K562 (cell line): ENCODE measurements at regions of chrX and their contacts with region 1.

Region 1: GRCh38 chrX:109890895-109891502 is 111.9 kb upstream of the TMEM164 start:
- DNase-seq: peak; percentile 68 to 83 (median 70)
- ATAC-seq: peak; percentile 88
- H3K4me3 ChIP-seq: no peak overlapping the region
- H3K27ac ChIP-seq: no peak overlapping the region
- H3K4me1 ChIP-seq: peaks cover 7 to 21% of the 10 kb centered on the region in 2 experiments; a peak in 4 of 5 replicates
- H3K27me3 ChIP-seq: no peaks in the 10 kb centered on the region
- CTCF ChIP-seq: peak; percentile 83 to 90 (median 84)
- EP300 ChIP-seq: no peak
- POLR2A ChIP-seq: no peak
- RAD21 ChIP-seq: peak; percentile 57 to 77

Region 2: DNA sequence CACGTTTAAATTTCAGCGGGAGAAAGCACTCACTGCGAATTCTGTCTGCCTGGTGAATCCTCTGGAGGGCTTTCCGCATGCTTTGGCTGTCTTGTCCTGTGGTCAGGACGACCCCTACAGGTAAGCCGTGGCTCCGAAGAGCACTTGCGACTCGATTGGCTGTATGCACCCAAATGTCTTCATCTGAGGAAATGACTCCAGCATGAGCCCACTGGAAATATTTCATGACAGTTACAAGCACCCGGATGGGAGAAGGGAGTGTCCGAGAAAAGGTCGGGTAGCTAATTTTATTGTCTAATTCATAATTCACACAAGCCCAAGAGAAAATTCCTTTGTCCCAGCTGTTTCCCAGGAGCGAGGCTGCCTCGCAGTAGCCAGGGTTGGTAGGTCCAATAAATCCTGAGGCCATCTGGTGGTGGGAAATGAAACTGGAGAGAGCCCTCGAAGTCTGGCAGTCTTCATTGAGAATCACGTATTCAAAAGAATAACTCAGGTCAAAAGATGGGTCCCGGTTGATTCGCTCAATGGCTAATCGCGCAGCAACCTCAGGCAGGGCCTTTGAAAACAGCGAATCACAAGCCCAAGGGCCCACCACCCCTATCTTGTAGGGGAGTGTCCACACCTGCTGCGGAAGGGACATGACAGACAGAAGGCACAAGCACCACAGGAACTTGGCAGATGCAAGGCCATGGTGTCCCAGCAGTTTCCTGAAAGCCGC is 415.7 kb before region 1 on chrX:
- CTCF ChIA-PET with region 1: no interaction called
- POLR2A ChIA-PET with region 1: no interaction called
- in situ Hi-C with region 1: loop called (anchors 10 kb)
- intact Hi-C with region 1: no loop called
- DNase-seq: peak; percentile 23 to 48 (median 28)
- ATAC-seq: peak; percentile 93
- H3K4me3 ChIP-seq: no peak overlapping the region
- H3K27ac ChIP-seq: no peak overlapping the region
- H3K4me1 ChIP-seq: no peaks in the 10 kb centered on the region; a peak in 2 of 5 replicates
- H3K27me3 ChIP-seq: peaks cover 0 to 5% of the 10 kb centered on the region in 2 experiments; a peak in 2 of 5 replicates
- CTCF ChIP-seq: peak; percentile 41 to 49 (median 46); a peak in 5 of 6 replicates
- EP300 ChIP-seq: no peak
- POLR2A ChIP-seq: no peak
- RAD21 ChIP-seq: 0 out of 4 replicates have a peak, but pooled peaks have one; percentile 24 to 25

Region 3: GRCh38 chrX:109635176-109635575 is 255.8 kb before region 1 on chrX:
- CTCF ChIA-PET with region 1: no interaction called
- POLR2A ChIA-PET with region 1: no interaction called
- in situ Hi-C with region 1: no loop called
- intact Hi-C with region 1: loop called (anchors 5 kb)
- DNase-seq: peak; percentile 20 to 34 (median 24)
- ATAC-seq: peak; percentile 85
- H3K4me3 ChIP-seq: no peak overlapping the region
- H3K27ac ChIP-seq: no peak overlapping the region
- H3K4me1 ChIP-seq: no peaks in the 10 kb centered on the region
- H3K27me3 ChIP-seq: no peaks in the 10 kb centered on the region
- CTCF ChIP-seq: peak; percentile 51 to 64 (median 57); a peak in 5 of 6 replicates
- EP300 ChIP-seq: no peak
- POLR2A ChIP-seq: no peak
- RAD21 ChIP-seq: no peak

Region 4: DNA sequence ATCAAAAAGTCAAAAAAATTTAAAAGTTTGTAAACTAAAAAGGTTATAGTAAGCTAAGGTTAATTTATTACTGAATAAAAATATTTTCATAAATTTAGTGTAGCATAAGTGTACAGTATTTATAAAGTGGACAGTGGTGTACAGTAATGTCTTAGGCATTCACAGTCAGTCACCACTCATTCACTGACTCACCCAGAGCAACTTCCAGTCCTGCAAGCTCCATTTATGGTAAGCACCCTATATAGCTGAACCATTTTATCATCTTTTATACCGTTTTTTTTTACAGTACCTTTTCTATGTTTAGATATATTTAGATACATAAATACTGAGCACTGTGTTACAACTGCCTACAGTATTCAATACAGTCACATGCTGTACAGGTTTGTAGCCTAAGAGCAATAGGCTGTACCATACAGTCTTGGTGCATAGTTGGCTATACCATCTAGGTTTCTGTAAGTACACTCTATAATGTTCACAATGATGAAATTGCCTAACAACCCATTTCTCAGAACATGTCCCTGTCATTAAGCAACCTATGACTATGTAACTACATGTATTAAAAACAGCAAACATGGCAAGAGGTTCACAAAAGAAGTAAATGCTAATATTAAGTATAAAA is 176.6 kb before region 1 on chrX:
- CTCF ChIA-PET with region 1: interaction called, 16 read pairs
- POLR2A ChIA-PET with region 1: interaction called, 3 read pairs
- in situ Hi-C with region 1: loop called (anchors 10 kb)
- intact Hi-C with region 1: loop called (anchors 1 kb)
- DNase-seq: no peak
- ATAC-seq: no peak; the same call in 2 of the 3 replicates
- H3K4me3 ChIP-seq: no peak overlapping the region
- H3K27ac ChIP-seq: no peak overlapping the region
- H3K4me1 ChIP-seq: no peaks in the 10 kb centered on the region; a peak in 2 of 5 replicates
- H3K27me3 ChIP-seq: no peaks in the 10 kb centered on the region
- CTCF ChIP-seq: no peak
- EP300 ChIP-seq: no peak
- POLR2A ChIP-seq: no peak
- RAD21 ChIP-seq: no peak

Region 5: GRCh38 chrX:109952984-109953905 is 62.2 kb after region 1 on chrX:
- CTCF ChIA-PET with region 1: no interaction called
- POLR2A ChIA-PET with region 1: no interaction called
- in situ Hi-C with region 1: no loop called
- intact Hi-C with region 1: no loop called
- DNase-seq: no peak
- ATAC-seq: peak; percentile 53
- H3K4me3 ChIP-seq: no peak overlapping the region
- H3K27ac ChIP-seq: peak overlapping the region; percentile 5; the same call in 2 of the 3 replicates
- H3K4me1 ChIP-seq: peaks cover 0 to 43% of the 10 kb centered on the region in 2 experiments; a peak in 4 of 5 replicates
- H3K27me3 ChIP-seq: no peaks in the 10 kb centered on the region
- CTCF ChIP-seq: no peak
- EP300 ChIP-seq: no peak
- POLR2A ChIP-seq: no peak
- RAD21 ChIP-seq: no peak

Region 6: DNA sequence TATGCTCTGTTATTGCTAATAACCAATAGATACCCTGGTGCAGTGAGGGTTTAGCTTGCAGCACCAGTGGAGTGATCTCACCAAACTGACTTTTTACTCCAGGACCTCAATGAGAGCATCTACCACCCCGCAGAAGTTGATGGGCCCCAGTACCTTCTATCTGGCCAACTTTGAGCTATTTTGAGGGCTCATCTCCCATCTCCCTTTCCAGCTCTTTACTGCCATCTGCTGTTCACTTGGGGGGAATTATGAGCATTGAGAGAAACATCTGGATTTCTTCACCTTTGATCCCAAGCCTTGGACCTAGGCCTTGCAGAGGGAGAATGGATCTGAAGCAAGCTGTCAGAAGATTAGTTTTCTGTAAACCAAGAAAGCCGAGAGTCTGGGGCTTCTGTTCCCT is 255.5 kb after region 1 on chrX:
- CTCF ChIA-PET with region 1: no interaction called
- POLR2A ChIA-PET with region 1: no interaction called
- in situ Hi-C with region 1: no loop called
- intact Hi-C with region 1: loop called (anchors 1 kb)
- DNase-seq: peak; percentile 63 to 68 (median 64)
- ATAC-seq: peak; percentile 91
- H3K4me3 ChIP-seq: no peak overlapping the region
- H3K27ac ChIP-seq: no peak overlapping the region
- H3K4me1 ChIP-seq: peaks cover 4 to 7% of the 10 kb centered on the region in 2 experiments; a peak in 3 of 5 replicates
- H3K27me3 ChIP-seq: no peaks in the 10 kb centered on the region
- CTCF ChIP-seq: peak; percentile 68 to 79 (median 73)
- EP300 ChIP-seq: no peak
- POLR2A ChIP-seq: no peak
- RAD21 ChIP-seq: peak; percentile 44 to 71